Calu3 (cell line): ENCODE measurements at regions of chr17 and their contacts with region 1.

Region 1: GRCh38 chr17:50478391-50479381 is at the start of gene RSAD1:
- DNase-seq: peak; percentile 96
- H3K4me3 Mint-ChIP-seq: peak within 1 kb of the TSS; percentile 65
- H3K27ac Mint-ChIP-seq: peak within 1 kb of the TSS; percentile 87
- H3K4me1 Mint-ChIP-seq: peaks cover 45% of the 10 kb centered on the region
- H3K27me3 Mint-ChIP-seq: no peaks in the 10 kb centered on the region
- CTCF ChIP-seq: peak; percentile 96
- total RNA-seq, gene RSAD1: 42.6 and 51.1 TPM in 2 replicates

Region 2: DNA sequence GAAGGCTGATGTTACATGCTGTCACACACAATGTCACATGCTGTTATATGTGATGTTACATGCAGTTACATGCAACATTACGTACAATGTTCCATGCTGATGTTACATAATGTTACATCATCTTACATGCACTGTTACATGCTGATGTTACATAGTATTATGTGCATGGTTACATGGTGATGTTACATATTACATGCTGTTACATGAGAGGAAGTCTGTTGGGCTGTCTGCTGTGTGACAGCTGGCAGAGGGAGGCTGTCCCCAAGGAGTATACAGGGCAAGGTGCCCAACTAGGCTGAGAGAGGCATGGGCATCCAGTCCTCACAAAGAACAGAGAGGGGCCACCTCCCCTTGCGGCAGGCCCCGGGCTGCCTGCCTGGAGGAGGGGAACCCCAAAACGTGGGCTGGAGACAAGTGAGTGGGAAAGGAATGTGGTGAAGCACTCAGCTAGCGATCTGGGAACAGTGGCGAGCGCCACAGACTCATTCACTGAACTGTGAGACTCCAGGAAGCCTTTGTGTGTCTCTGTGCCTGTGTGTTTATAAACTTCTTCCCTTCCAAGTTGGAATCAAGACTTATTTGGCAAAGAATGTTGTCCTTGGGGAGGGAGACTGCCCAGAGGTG is 173.8 kb before region 1 on chr17:
- CTCF ChIA-PET with region 1: no interaction called
- intact Hi-C with region 1: no loop called
- DNase-seq: no peak
- H3K4me3 Mint-ChIP-seq: no peak overlapping the region
- H3K27ac Mint-ChIP-seq: no peak overlapping the region
- H3K4me1 Mint-ChIP-seq: no peaks in the 10 kb centered on the region
- H3K27me3 Mint-ChIP-seq: peaks cover 65% of the 10 kb centered on the region
- CTCF ChIP-seq: no peak

Region 3: GRCh38 chr17:50361561-50362480 is 116.9 kb before region 1 on chr17:
- CTCF ChIA-PET with region 1: interaction called, 28 read pairs
- intact Hi-C with region 1: loop called (anchors 1 kb)
- DNase-seq: peak; percentile 73
- H3K4me3 Mint-ChIP-seq: no peak overlapping the region
- H3K27ac Mint-ChIP-seq: no peak overlapping the region
- H3K4me1 Mint-ChIP-seq: no peaks in the 10 kb centered on the region
- H3K27me3 Mint-ChIP-seq: no peaks in the 10 kb centered on the region
- CTCF ChIP-seq: peak; percentile 90

Region 4: DNA sequence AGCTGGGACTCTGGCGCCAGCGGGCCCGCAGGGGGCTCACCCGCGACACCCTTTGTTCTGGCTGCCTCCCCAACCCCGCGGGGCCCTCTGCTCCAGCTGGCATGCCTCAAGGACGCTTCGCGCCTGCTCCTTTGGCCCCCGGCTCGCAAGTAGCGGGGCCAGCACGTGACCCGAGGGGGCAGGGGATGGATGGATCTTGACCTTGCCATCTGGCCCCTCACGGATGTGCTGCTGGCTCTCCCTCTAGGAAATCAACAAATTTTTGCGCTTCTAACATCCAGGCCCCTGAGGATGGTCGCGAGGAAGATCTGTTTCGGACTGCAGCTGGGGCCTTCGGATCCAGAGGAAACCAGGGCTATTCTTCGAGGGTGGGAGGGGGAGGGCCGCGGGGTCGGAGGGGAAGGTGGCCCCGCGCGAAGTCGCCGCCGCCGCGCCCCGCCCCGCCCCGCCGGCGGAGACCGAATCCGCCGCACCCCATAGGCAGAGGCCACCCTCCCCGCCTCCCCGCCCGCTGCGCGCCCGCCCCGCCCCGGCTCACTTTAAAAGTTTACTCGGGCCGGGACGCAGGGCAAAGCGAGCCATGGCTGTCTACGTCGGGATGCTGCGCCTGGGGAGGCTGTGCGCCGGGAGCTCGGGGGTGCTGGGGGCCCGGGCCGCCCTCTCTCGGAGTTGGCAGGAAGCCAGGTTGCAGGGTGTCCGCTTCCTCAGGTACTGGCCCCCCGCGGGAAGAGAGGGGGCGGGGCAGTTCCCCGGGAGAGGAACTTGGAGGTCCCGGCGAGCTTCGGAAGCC is 52.8 kb before region 1 on chr17 and contains the start of gene ACSF2:
- CTCF ChIA-PET with region 1: interaction called, 4 read pairs
- intact Hi-C with region 1: loop called (anchors 5 kb)
- DNase-seq: peak; percentile 87
- H3K4me3 Mint-ChIP-seq: peak within 1 kb of the TSS; percentile 87
- H3K27ac Mint-ChIP-seq: peak within 1 kb of the TSS; percentile 88
- H3K4me1 Mint-ChIP-seq: peaks cover 73% of the 10 kb centered on the region
- H3K27me3 Mint-ChIP-seq: no peaks in the 10 kb centered on the region
- CTCF ChIP-seq: no peak
- total RNA-seq, gene ACSF2: 148 and 156 TPM in 2 replicates

Region 5: GRCh38 chr17:50501054-50501453 is 22.4 kb after region 1 on chr17:
- CTCF ChIA-PET with region 1: interaction called, 6 read pairs
- intact Hi-C with region 1: loop called (anchors 2 kb)
- DNase-seq: peak; percentile 62
- H3K4me3 Mint-ChIP-seq: no peak overlapping the region
- H3K27ac Mint-ChIP-seq: no peak overlapping the region
- H3K4me1 Mint-ChIP-seq: peaks cover 10% of the 10 kb centered on the region
- H3K27me3 Mint-ChIP-seq: peaks cover 19% of the 10 kb centered on the region
- CTCF ChIP-seq: peak; percentile 55

Region 6: DNA sequence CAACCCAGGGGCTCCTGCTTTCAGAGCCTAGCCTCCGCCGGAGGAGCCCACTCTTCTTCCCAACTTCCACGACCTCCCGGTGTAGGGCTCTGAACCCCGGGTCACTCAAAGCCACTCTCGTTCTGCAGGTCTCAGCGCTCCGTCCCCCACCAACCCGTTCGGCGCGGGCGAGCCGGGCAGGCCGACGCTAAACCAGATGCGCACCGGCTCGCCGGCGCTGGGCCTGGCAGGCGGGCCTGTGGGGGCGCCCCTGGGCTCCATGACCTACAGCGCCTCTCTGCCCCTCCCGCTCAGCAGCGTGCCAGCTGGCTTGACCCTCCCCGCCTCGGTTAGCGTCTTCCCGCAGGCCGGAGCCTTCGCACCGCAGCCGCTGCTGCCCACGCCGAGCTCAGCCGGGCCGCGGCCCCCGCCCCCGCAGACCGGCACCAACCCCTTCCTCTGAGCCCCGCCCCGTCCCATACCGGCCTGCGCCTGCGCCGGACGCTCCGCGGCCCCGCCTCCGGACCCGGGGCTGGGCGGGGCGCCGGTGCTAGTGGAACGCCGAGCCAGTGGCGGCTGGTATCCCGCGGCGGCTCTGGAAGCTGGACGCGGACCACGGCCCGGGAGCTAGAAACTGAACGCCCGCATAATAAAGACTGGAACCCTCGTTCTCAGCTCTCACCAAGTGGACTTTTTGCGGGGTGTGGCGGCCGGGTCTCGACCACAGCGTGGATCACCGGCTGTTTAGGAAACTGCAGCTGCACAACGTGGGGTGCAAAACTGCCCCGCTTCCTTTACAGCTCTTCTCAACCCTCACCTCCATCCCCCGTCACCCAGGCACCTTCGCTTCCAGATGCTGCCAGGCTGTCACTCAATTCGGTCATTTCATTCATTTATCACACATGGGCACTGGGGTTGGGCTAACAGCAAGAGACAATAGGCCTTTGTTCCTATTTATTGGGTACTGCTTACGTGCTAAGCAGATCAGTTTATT is 63.3 kb after region 1 on chr17:
- CTCF ChIA-PET with region 1: interaction called, 9 read pairs
- intact Hi-C with region 1: loop called (anchors 2 kb)
- DNase-seq: peak; percentile 97
- H3K4me3 Mint-ChIP-seq: peak overlapping the region; percentile 63
- H3K27ac Mint-ChIP-seq: peak overlapping the region; percentile 90
- H3K4me1 Mint-ChIP-seq: peaks cover 50% of the 10 kb centered on the region
- H3K27me3 Mint-ChIP-seq: no peaks in the 10 kb centered on the region
- CTCF ChIP-seq: peak; percentile 20

Region 7: DNA sequence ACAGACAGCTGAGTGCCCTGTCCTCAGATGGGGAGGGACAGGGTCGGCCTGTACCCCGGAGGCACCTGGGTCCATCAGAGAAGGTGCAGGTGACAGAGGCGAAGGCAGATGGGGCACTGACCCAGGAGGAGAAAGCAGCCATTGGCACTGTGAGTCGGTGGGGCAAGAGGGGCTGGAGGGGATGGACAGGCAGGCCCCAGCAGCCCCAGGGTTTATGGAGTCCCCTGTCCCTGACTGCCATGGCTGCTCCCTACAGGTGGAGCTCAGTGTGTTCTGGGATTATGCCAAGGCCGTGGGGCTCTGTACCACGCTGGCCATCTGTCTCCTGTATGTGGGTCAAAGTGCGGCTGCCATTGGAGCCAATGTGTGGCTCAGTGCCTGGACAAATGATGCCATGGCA is 196.9 kb after region 1 on chr17:
- CTCF ChIA-PET with region 1: no interaction called
- intact Hi-C with region 1: no loop called
- DNase-seq: no peak
- H3K4me3 Mint-ChIP-seq: no peak overlapping the region
- H3K27ac Mint-ChIP-seq: no peak overlapping the region
- H3K4me1 Mint-ChIP-seq: peaks cover 36% of the 10 kb centered on the region
- H3K27me3 Mint-ChIP-seq: no peaks in the 10 kb centered on the region
- CTCF ChIP-seq: no peak

Region 8: GRCh38 chr17:50689251-50689650 is 210.6 kb after region 1 on chr17:
- CTCF ChIA-PET with region 1: interaction called, 6 read pairs
- intact Hi-C with region 1: loop called (anchors 2 kb)
- DNase-seq: peak; percentile 60
- H3K4me3 Mint-ChIP-seq: no peak overlapping the region
- H3K27ac Mint-ChIP-seq: peak overlapping the region; percentile 20
- H3K4me1 Mint-ChIP-seq: peaks cover 84% of the 10 kb centered on the region
- H3K27me3 Mint-ChIP-seq: no peaks in the 10 kb centered on the region
- CTCF ChIP-seq: no peak